Posterior vena cava (tissue), 2 donors: ENCODE measurements at regions of chr10 and their contacts with region 1.

Region 1: DNA sequence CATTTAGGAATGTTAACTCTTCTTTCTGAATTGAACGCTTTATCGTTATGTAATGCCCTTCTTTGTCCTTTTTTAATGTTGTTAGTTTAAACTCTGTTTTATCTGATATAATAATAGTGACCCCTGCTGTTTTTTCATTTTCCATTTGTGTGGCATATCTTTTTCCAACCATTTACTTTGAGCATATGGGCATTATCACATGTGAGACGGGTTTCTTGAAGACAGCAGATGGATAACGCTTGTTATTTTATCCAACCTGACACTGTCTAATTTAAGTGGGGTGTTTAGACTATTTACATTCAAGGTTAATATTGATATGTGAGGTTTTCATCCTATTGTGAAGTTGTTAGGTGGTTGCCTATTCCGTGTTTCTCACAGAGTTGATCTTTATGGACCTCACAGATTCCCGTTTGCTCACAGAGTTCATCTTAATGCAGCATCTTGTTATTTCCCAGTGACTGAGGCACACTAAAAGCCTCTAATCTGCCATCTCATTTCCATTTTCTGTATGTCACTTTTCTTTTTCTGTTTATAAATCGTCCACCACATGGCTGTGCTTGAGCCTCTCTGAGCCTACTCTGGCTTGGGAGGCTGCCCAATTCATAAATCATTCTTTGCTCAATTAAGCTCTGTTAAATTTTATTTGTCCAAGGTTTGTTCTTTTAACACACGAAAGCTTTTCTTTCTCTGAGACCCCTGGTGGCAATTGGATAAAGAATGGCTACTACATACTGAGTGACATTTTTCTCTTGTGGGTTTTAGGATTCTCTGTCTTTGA is 286.2 kb downstream of the HTR7 start:
- DNase-seq: no peak

Region 2: GRCh38 chr10:90424730-90425129 is 146.9 kb before region 1 on chr10:
- intact Hi-C with region 1: no loop called
- DNase-seq: no peak

Region 3: DNA sequence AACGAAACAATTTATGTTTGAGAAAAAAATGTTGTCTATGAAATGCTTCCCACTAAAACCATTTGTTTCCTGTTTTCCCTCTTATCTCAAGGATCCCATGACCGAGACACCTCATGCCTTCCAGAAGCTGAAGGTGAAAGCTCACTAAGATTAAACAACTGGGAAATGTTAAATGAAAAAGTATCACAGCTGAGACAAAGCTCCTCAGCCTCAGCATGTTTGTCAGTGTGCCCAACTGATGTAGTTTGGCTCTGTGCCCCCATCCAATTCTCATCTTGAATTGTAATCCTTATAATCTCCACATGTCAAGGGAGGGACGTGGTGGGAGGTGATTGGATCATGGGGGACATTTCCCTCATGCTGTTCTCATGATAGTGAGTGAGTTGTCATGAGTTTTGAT is 41.1 kb before region 1 on chr10:
- intact Hi-C with region 1: no loop called
- DNase-seq: no peak

Region 4: DNA sequence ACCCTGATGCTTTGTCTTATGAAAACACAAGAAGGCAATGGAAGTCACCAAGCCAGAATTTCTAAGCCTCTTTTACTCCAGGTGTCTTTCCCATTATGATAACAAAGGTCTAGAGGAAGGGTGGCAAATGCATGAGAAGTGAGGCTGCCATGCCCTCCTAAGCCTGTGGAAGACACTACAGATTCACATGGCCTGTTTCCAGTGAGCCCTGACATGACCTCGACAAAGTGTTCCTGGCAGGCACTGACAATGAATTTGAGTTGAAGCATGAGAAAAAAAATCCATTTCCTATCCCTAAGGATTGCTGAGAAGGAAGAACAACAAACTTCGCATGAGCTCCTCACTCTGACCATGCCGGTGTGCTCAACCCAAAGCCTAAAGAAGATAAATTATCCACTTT is 18.2 kb after region 1 on chr10:
- intact Hi-C with region 1: loop called in 1 of 2 experiments (anchors 2 kb)
- DNase-seq: no peak